Calu3 (cell line): ENCODE measurements at regions of chr7 and their contacts with region 1.

Region 1: DNA sequence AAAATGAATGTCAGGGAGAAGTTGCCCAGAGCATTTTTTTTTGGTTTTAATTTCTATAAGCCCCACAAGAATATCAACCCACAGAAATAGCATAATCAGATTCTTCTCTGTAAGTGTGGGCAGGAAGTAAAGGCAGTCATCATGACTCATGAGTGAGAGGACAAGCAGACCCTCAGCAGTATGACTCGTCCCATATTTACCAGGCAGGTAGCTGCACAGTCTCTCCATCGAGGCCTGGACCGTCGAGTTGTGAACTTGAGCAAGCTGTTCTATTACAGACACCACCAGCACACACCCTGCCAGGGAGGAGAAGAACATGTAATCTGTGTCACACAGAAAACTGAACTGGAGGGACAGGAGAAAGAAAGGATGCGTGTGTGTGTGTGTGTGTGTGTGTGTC is 37.8 kb downstream of the AOAH start:
- DNase-seq: peak; percentile 28
- H3K4me3 Mint-ChIP-seq: no peak overlapping the region
- H3K27ac Mint-ChIP-seq: peak overlapping the region; percentile 7
- H3K4me1 Mint-ChIP-seq: peaks cover 18% of the 10 kb centered on the region
- H3K27me3 Mint-ChIP-seq: no peaks in the 10 kb centered on the region
- CTCF ChIP-seq: no peak

Region 2: GRCh38 chr7:36659172-36659516 is 27.4 kb before region 1 on chr7:
- CTCF ChIA-PET with region 1: no interaction called
- intact Hi-C with region 1: no loop called
- DNase-seq: peak; percentile 32
- H3K4me3 Mint-ChIP-seq: no peak overlapping the region
- H3K27ac Mint-ChIP-seq: peak overlapping the region; percentile 15
- H3K4me1 Mint-ChIP-seq: peaks cover 29% of the 10 kb centered on the region
- H3K27me3 Mint-ChIP-seq: no peaks in the 10 kb centered on the region
- CTCF ChIP-seq: no peak

Region 3: DNA sequence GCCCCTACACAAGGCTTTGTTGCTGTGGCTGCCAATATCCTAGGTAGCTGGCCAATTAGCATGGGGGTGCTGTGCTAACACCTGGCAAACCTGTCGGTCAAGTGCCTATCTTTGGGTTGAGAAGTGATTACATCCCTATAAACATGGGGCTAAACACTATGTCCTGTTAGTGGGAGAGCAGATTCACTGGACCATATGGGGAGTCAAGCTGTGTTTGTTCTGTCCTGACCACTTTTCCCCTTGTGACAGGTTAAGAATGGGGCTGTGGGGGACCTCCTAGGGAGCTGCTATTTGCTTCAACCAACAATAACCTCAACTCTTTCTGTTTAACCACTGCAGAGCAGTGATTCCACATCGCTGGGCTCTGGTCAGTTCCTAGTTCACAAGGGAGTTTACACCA is 189.3 kb after region 1 on chr7:
- CTCF ChIA-PET with region 1: no interaction called
- intact Hi-C with region 1: loop called (anchors 5 kb)
- DNase-seq: peak; percentile 22
- H3K4me3 Mint-ChIP-seq: no peak overlapping the region
- H3K27ac Mint-ChIP-seq: no peak overlapping the region
- H3K4me1 Mint-ChIP-seq: no peaks in the 10 kb centered on the region
- H3K27me3 Mint-ChIP-seq: peaks cover 19% of the 10 kb centered on the region
- CTCF ChIP-seq: no peak

Region 4: GRCh38 chr7:36967387-36967786 is 280.9 kb after region 1 on chr7:
- CTCF ChIA-PET with region 1: no interaction called
- intact Hi-C with region 1: loop called (anchors 5 kb)
- DNase-seq: peak; percentile 75
- H3K4me3 Mint-ChIP-seq: no peak overlapping the region
- H3K27ac Mint-ChIP-seq: no peak overlapping the region
- H3K4me1 Mint-ChIP-seq: peaks cover 51% of the 10 kb centered on the region
- H3K27me3 Mint-ChIP-seq: no peaks in the 10 kb centered on the region
- CTCF ChIP-seq: peak; percentile 87